Heart right ventricle (tissue), 16 donors: ENCODE measurements at regions of chr19 and their contacts with region 1.

Region 1: DNA sequence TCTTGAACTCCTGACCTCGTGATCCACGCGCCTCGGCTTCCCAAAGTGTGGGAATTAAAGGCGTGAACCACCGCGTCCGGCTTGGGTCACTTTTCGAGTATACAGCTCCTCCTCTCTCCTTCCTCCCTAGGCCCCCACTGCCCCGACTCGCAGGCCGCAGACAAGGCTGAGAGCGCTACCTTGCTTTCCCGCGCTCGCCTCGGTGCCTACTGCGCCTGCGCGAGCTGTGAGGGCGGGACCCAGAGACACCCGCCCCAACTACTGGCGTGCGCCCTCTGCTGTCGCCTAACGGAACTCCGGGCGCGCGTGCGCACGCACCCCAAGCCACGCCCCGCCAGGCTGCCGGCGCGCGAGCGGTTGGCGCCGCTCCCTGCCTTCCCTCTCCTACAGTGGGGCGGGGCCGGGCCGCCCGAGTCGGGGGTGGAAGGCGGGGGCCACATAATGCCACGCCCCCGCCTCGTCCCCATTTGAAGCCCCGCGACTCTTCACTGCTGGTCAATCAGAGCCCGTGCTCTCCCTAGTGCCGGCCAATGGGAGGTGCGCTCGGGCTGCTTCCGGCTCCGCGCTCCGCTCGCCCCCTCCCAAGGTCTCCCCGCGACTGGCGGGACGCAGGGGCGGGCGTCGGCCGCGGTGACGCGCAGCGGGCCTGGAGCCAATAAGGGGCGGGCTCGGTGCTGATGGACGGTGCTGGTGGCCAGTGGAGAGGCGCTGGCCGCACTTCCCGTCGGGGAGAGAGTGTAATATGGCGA is at the start of gene RAB8A:
- DNase-seq: peak; percentile 99
- ATAC-seq: peak; percentile 97 to 99 (median 98)
- H3K4me3 ChIP-seq: peak within 1 kb of the TSS; percentile 64 to 96 (median 83)
- H3K27ac ChIP-seq: peak within 1 kb of the TSS; percentile 68 to 98 (median 92)
- H3K4me1 ChIP-seq: peaks cover 10 to 50% (median 28%) of the 10 kb centered on the region in 9 donors
- H3K27me3 ChIP-seq: no peaks in the 10 kb centered on the region
- CTCF ChIP-seq: peak in 8 of 9 donors; percentile 93 to 99 (median 98)
- total RNA-seq, gene RAB8A: 16.4 to 47.4 (median 21.0) TPM

Region 2: GRCh38 chr19:15836595-15837337 is 274.6 kb before region 1 on chr19:
- intact Hi-C with region 1: loop called in 1 of 10 experiments (anchors 5 kb)
- DNase-seq: peak; percentile 95 to 99
- ATAC-seq: peak; percentile 98 to 100 (median 100)
- H3K4me3 ChIP-seq: peak overlapping the region; percentile 63 to 90 (median 78)
- H3K27ac ChIP-seq: peak overlapping the region; percentile 80 to 99 (median 97)
- H3K4me1 ChIP-seq: peaks cover 0 to 20% (median 7%) of the 10 kb centered on the region in 9 donors
- H3K27me3 ChIP-seq: peaks cover 0 to under 1% (median 0%) of the 10 kb centered on the region in 7 donors
- CTCF ChIP-seq: no peak

Region 3: GRCh38 chr19:15869109-15869555 is 242.2 kb before region 1 on chr19:
- intact Hi-C with region 1: no loop called
- DNase-seq: peak in 1 of 2 donors; percentile 15
- ATAC-seq: peak in 4 of 8 donors; percentile 53 to 74 (median 61)
- H3K4me3 ChIP-seq: no peak overlapping the region
- H3K27ac ChIP-seq: no peak overlapping the region
- H3K4me1 ChIP-seq: peaks cover 0 to 3% (median 0%) of the 10 kb centered on the region in 9 donors
- H3K27me3 ChIP-seq: peaks cover 0 to 44% (median 25%) of the 10 kb centered on the region in 7 donors
- CTCF ChIP-seq: peak; percentile 33 to 65 (median 55)

Region 4: DNA sequence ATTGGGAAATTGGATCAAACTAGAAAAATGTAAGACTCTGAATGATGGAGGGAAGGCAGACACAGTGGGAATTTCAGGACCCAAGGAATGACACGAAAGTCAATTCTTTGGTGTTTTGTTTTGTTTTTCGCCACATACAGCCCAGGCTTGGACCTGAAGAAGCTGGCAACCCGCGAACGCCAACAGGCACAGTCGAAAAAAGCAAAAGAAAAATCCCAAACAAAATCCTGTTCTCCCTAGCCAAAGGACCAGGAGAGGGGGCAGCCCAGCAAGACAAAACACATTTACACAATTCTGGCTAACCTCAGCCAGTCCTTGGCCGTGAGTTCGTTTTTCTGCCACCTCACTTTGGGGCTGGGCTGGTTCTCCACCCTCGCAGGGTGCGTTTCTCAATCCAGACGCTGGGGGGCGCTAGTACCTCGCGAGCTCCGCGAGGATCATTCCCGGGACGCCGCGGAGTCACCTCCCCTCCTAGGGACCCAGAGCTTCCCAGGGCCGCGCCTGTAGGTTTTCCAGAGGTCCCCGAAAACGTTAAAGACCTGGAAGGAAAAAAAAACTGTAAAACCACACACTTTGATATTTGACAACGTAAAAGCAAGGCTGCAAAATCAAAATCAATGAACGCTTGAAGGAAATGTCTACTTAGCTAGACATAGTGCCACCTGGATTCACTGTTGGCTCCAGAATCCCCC is 69.9 kb before region 1 on chr19:
- intact Hi-C with region 1: loop called in 8 of 10 experiments (anchors 2 to 5 kb)
- DNase-seq: peak; percentile 79 to 84
- ATAC-seq: peak; percentile 87 to 96 (median 94)
- H3K4me3 ChIP-seq: peak overlapping the region in 6 of 10 donors; percentile 7 to 32 (median 24)
- H3K27ac ChIP-seq: no peak overlapping the region
- H3K4me1 ChIP-seq: peaks cover 0 to 17% (median 10%) of the 10 kb centered on the region in 9 donors
- H3K27me3 ChIP-seq: peaks cover 0 to 9% (median 0%) of the 10 kb centered on the region in 7 donors
- CTCF ChIP-seq: peak in 8 of 9 donors; percentile 95 to 99 (median 96)

Region 5: DNA sequence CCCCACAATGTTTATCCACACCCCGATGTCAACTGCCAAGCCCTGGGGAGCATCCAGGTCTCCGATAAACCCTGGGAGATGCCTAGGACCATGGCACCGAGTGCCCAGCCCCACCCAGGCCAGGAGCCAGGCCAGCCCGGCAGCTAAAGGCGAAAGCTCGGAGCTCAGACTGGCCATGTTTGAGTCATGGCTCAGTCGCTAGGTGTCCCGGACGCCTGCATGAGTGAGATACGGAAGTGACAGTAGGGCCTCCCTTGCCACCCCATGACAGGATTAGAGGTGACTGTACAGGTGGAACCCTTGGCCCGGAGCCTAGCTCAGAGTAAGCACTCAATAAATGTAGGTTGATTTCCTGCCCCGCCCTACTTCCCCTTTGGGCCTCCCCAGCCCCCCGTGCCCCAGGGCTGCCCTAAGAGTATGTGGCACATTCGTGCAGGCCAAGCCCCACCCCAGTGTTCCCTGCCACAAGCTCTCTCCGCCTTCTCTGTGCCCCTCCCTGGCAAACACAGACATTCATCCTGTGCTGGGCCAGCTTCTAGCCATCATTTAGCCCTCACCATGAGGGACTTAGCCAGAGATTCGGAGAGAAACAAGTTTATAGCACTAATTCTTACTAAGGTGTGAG is 40.9 kb before region 1 on chr19:
- intact Hi-C with region 1: loop called in 6 of 10 experiments (anchors 5 to 10 kb)
- DNase-seq: peak; percentile 36 to 50
- ATAC-seq: peak in 7 of 8 donors; percentile 34 to 69 (median 56)
- H3K4me3 ChIP-seq: peak overlapping the region in 3 of 10 donors; percentile 10 to 26 (median 12)
- H3K27ac ChIP-seq: peak overlapping the region; percentile 56 to 88 (median 78)
- H3K4me1 ChIP-seq: peaks cover 6 to 57% (median 33%) of the 10 kb centered on the region in 9 donors
- H3K27me3 ChIP-seq: no peaks in the 10 kb centered on the region
- CTCF ChIP-seq: no peak

Region 6: DNA sequence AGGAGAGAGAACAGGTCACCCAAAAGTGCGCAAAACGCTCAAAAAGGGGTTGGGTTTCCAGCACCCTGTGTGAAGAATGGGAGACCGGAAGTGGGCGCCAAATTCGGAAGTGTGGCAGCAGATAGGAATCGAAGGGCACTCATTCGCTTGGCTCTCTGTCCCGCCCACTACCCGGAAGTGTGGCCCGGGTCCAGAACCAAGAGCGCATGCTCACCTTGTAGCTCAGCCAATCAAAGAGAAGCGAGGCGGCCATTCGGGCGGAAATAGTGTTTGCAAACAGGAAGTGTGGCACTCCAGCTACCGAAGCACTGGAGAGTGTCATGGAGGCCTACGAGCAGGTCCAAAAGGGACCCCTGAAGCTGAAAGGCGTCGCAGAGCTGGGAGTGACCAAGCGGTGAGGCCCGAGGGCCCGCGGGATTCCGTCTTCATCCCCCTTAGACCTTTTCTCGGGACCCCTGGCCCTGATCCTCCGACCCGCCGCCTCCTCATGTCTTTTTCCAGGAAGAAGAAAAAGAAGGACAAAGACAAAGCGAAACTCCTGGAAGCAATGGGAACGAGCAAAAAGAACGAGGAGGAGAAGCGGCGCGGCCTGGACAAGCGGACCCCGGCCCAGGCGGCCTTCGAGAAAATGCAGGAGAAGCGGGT is 73.9 kb after region 1 on chr19 and contains the start of gene FAM32A:
- intact Hi-C with region 1: loop called in 5 of 10 experiments (anchors 2 to 10 kb)
- DNase-seq: peak; percentile 99
- ATAC-seq: peak; percentile 96 to 99 (median 98)
- H3K4me3 ChIP-seq: peak within 1 kb of the TSS; percentile 74 to 96 (median 90)
- H3K27ac ChIP-seq: peak within 1 kb of the TSS; percentile 21 to 93 (median 87)
- H3K4me1 ChIP-seq: peaks cover 0 to 40% (median 21%) of the 10 kb centered on the region in 9 donors
- H3K27me3 ChIP-seq: peaks cover 0 to 20% (median 0%) of the 10 kb centered on the region in 7 donors
- CTCF ChIP-seq: peak in 7 of 9 donors; percentile 10 to 50 (median 34)
- total RNA-seq, gene FAM32A: 27.0 to 44.5 (median 32.5) TPM